Transverse colon (tissue), 4 donors: ENCODE measurements at regions of chr13 and their contacts with region 1.

Region 1: DNA sequence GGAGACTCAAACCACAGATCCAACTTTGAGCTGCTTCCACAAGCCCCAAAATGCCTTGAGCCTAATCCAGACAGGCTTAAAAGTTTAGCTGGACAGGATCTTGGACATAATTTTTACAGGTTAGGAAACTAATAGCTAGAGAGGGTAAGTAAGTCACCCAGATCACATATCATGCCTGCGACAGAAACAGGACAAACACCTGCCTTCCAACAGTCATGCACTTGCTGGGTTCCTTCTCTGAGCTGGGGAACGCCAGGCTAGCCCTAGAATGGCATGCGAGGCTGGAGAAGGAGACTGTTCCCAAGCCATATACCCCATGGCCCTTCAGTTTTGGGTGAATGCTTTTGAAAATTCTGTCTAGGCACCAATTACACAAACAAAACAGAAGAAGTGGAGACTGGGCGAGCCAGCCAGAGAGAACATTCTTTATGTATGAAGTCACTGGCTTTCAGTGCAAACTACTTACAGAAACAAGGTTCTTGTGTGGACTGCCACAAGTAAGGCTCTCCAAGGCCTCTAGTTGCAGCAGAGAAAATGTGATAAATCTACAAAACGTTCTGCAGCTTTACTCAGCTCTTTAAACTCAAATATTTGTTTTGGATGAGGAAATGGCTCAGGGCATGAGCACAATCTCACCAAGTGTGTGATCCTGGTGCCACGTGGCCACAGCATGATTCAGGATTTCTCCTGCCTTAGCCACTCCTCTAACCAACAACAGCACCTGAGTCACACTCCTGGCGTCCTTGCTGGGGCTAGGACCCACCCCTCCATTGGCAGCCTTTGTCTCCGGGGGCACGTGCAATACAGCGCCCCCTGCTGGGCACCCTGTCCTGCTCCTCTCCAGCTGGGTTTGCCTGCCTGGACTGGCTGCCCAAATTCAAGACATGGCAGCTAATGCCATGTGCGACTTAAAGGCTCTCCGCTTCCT is 73.4 kb upstream of the UBL3 start:
- DNase-seq: peak; percentile 91
- H3K4me3 ChIP-seq: no peak overlapping the region
- H3K27ac ChIP-seq: peak overlapping the region; percentile 85 to 89 (median 88)
- H3K4me1 ChIP-seq: peaks cover 38 to 48% (median 41%) of the 10 kb centered on the region in 4 donors
- H3K27me3 ChIP-seq: no peaks in the 10 kb centered on the region
- CTCF ChIP-seq: peak; percentile 80 to 95 (median 84)
- EP300 ChIP-seq: no peak
- POLR2A ChIP-seq: peak; percentile 9

Region 2: GRCh38 chr13:29020314-29020713 is 903.5 kb before region 1 on chr13:
- in situ Hi-C with region 1: no loop called
- intact Hi-C with region 1: no loop called
- DNase-seq: no peak
- H3K4me3 ChIP-seq: no peak overlapping the region
- H3K27ac ChIP-seq: no peak overlapping the region
- H3K4me1 ChIP-seq: no peaks in the 10 kb centered on the region
- H3K27me3 ChIP-seq: no peaks in the 10 kb centered on the region
- CTCF ChIP-seq: no peak
- EP300 ChIP-seq: no peak
- POLR2A ChIP-seq: no peak

Region 3: DNA sequence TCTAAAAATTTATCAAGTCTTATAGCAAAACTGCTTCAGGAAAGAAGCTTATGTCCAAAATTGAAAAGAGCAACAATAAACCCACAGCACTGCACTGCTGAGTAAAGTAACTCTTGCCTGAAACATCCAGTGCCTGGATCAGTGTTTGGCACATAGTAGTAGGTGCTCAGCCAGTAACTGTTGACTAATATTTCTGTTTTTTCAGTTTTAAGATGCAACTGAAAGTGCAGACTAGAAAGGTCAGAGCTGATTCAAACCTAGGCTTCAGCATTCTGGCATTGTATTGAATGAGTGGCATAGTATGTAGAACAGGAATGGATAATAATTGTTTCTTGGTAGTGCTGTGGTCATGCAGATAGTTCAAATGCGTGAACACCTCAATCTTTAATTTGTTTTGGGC is 141.0 kb before region 1 on chr13:
- in situ Hi-C with region 1: loop called in 1 of 4 experiments (anchors 25 kb)
- intact Hi-C with region 1: no loop called
- DNase-seq: no peak
- H3K4me3 ChIP-seq: no peak overlapping the region
- H3K27ac ChIP-seq: no peak overlapping the region
- H3K4me1 ChIP-seq: peaks cover 5 to 27% (median 9%) of the 10 kb centered on the region in 4 donors
- H3K27me3 ChIP-seq: no peaks in the 10 kb centered on the region
- CTCF ChIP-seq: no peak
- EP300 ChIP-seq: no peak
- POLR2A ChIP-seq: no peak

Region 4: DNA sequence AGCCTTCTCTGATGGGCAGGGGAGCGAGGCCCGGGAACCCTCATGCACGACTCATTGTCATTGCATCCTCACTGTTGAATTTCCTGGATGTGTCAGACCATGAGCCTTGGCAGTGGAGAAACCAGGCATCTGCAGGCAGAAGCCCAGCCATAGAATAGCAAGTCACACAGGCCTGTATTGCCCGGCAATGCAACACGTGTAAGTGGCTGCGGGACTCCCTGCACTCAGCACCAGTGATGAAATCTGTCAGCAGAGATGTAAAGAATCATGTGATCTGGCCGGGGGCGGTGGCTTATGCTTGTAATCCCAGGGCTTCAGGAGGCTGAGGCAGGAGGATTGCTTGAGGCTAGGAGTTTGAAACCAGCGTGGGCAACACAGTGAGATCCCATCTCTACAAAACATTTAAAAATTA is 183.8 kb after region 1 on chr13:
- in situ Hi-C with region 1: loop called in 2 of 4 experiments (anchors 5 to 10 kb)
- intact Hi-C with region 1: loop called (anchors 10 kb)
- DNase-seq: peak; percentile 17
- H3K4me3 ChIP-seq: no peak overlapping the region
- H3K27ac ChIP-seq: peak overlapping the region in 2 of 4 donors; percentile 72 to 78
- H3K4me1 ChIP-seq: peaks cover under 1 to 19% (median 8%) of the 10 kb centered on the region in 4 donors
- H3K27me3 ChIP-seq: no peaks in the 10 kb centered on the region
- CTCF ChIP-seq: no peak
- EP300 ChIP-seq: no peak
- POLR2A ChIP-seq: no peak

Region 5: GRCh38 chr13:31352467-31352866 is 1428.6 kb after region 1 on chr13:
- in situ Hi-C with region 1: no loop called
- intact Hi-C with region 1: no loop called
- DNase-seq: no peak
- H3K4me3 ChIP-seq: no peak overlapping the region
- H3K27ac ChIP-seq: no peak overlapping the region
- H3K4me1 ChIP-seq: no peaks in the 10 kb centered on the region
- H3K27me3 ChIP-seq: peaks cover 10% of the 10 kb centered on the region
- CTCF ChIP-seq: no peak
- EP300 ChIP-seq: no peak
- POLR2A ChIP-seq: no peak